ENCODE measurements at regions of chr9 and their contacts with region 1.

Region 1: DNA sequence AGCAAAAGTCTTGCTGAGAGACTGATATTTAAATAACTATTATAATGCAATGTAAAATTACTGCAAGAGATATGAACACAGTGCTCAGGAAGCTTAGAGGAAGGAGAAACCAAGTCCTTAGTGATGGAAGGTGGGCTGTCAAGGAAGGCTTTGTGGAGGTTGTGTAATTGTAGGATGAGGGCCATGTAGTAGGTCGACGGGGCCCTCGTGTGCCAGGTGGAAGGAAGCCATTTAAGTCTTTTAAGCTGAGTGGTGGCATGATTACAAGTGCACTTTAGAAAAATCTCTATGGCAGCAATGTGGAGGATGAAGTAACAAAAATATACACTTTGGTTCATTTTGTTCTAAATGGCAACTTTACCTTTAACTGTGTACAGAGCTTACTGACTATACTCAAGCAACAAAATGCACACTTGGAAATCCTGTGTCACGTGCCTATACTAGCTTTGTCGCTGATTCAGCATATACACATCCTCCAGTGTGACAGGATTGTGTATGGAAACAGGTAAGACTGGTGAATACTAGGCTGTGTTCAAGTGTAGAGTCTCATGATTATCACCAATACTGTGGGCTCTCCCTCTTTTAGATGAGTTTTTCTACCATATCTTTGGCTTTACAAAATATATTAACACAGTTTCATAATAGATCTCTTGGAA is 78.6 kb downstream of the TMC1 start:
- DNase-seq: no peak
- ATAC-seq: no peak
- H3K4me3 Mint-ChIP-seq: no peak overlapping the region
- H3K27ac Mint-ChIP-seq: no peak overlapping the region
- H3K4me1 Mint-ChIP-seq: peaks cover 5% of the 10 kb centered on the region
- H3K27me3 Mint-ChIP-seq: no peaks in the 10 kb centered on the region

Region 2: GRCh38 chr9:72661401-72662135 is 61.6 kb after region 1 on chr9:
- CTCF ChIA-PET with region 1: no interaction called
- POLR2A ChIA-PET with region 1: no interaction called
- intact Hi-C with region 1: loop called in 1 of 2 experiments (anchors 10 kb)
- DNase-seq: no peak
- ATAC-seq: no peak
- H3K4me3 Mint-ChIP-seq: no peak overlapping the region
- H3K27ac Mint-ChIP-seq: no peak overlapping the region
- H3K4me1 Mint-ChIP-seq: no peaks in the 10 kb centered on the region
- H3K27me3 Mint-ChIP-seq: peaks cover 3% of the 10 kb centered on the region

Measured in activated CD4-positive, alpha-beta T cell treated with anti-CD3 and anti-CD28 coated beads for 36 hours (primary cell).